Activated CD8-positive, alpha-beta T cell treated with anti-CD3 and anti-CD28 coated beads for 36 hours (primary cell): ENCODE measurements at regions of chr17 and their contacts with region 1.

Region 1: DNA sequence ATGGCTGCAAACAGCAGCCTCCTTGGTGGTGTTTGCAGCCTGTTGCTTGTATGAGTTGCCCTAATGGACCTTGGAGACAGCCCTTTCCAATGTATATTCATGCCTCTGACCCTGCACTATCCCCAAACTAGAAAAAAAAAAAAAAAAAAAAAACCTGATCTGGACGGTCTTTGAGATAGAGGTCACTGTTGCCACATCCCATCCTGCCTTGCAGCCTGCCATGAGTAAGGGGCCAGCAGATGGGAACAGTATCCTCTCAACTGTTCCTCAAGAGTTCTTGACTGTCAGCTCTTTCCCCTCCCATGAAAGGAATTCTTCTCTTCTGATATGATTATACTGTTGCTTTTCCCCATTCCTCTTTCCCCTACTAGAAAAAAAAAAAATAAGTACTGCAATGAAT is 152.4 kb downstream of the SSH2 start:
- DNase-seq: no peak
- ATAC-seq: no peak
- H3K4me3 Mint-ChIP-seq: no peak overlapping the region
- H3K27ac Mint-ChIP-seq: no peak overlapping the region
- H3K4me1 Mint-ChIP-seq: peaks cover 8% of the 10 kb centered on the region
- H3K27me3 Mint-ChIP-seq: no peaks in the 10 kb centered on the region
- CTCF ChIP-seq: no peak

Region 2: DNA sequence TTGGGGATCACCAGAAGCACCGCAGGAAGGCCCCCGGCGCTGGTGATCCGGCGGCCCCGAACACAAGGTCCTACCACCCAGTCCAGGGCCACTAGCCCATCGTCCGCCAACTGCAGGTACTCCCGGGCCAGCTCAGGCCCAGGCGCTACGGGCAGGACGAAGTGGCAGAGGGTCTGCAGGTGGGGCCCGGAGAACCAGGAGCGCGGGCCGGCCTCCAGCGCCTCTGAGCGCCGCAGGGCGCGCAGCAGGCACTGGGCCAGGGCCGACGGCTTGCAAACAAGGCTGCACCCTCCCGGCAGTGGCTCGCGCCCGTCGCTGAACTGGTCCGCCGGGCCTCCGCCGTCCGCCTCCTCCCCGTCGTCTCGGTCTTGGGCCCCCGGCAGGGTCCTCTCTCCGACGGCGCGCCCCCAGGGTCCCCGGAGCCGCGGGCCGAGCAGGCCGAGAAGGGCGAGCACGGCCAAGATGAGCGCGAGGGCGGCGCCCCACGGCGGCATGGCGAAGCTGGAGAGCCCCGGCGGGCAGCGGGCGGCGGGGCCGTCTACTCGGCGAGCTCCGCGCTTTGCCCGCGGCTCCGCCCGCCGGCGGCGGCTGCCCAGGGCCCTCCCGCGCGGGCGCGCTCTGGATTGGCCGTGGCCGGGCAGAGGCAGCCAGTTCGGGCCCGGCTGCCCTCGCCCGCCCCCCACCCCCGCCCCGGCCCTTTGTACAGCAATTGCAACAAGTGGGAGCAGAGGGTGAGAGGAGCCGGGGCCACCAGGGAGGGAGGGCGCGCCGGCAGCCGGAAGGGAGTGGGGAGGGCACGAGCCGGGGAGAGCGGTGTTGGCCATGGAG is 211.0 kb before region 1 on chr17 and contains the start of gene ABHD15:
- CTCF ChIA-PET with region 1: no interaction called
- POLR2A ChIA-PET with region 1: no interaction called
- intact Hi-C with region 1: no loop called
- DNase-seq: peak; percentile 77
- ATAC-seq: peak; percentile 45
- H3K4me3 Mint-ChIP-seq: peak within 1 kb of the TSS; percentile 86
- H3K27ac Mint-ChIP-seq: peak within 1 kb of the TSS; percentile 91
- H3K4me1 Mint-ChIP-seq: peaks cover 32% of the 10 kb centered on the region
- H3K27me3 Mint-ChIP-seq: no peaks in the 10 kb centered on the region
- CTCF ChIP-seq: no peak
- total RNA-seq, gene ABHD15: 9.7 to 10.1 TPM

Region 3: GRCh38 chr17:29640413-29640812 is 137.2 kb before region 1 on chr17:
- CTCF ChIA-PET with region 1: interaction called, 155 read pairs
- POLR2A ChIA-PET with region 1: no interaction called
- intact Hi-C with region 1: loop called (anchors 1 kb)
- DNase-seq: no peak
- ATAC-seq: no peak
- H3K4me3 Mint-ChIP-seq: no peak overlapping the region
- H3K27ac Mint-ChIP-seq: peak overlapping the region; percentile 87
- H3K4me1 Mint-ChIP-seq: peaks cover 34% of the 10 kb centered on the region
- H3K27me3 Mint-ChIP-seq: no peaks in the 10 kb centered on the region
- CTCF ChIP-seq: no peak

Region 4: DNA sequence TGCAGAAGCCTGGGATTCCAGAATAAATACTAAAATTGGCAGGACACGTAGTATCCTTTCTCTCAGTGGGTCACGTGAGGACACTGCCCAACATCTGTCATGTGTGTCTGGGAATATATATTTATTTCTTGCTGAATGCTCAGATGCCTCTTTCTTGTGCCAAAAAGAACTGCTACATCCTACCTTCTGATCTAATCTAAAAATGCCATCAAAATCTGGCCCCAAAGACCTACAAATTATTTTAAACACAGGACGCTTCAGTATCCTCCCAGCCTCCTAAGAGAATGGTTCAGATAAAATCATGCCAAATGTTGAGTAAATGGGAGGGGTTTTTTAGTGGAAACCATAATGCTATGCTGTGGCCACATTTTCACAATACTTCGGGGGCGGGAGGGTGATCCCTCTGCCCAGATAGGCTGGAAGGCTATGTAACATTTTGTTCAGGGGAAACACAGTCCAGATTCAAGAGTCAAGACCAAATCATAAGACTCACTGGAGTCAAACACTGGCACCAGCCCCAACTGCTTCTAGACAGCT is 132.1 kb before region 1 on chr17:
- CTCF ChIA-PET with region 1: interaction called, 155 read pairs
- POLR2A ChIA-PET with region 1: interaction called, 3 read pairs
- intact Hi-C with region 1: no loop called
- DNase-seq: peak; percentile 46
- ATAC-seq: peak; percentile 62
- H3K4me3 Mint-ChIP-seq: no peak overlapping the region
- H3K27ac Mint-ChIP-seq: peak overlapping the region; percentile 31
- H3K4me1 Mint-ChIP-seq: peaks cover 27% of the 10 kb centered on the region
- H3K27me3 Mint-ChIP-seq: no peaks in the 10 kb centered on the region
- CTCF ChIP-seq: no peak

Region 5: GRCh38 chr17:29653995-29654714 is 123.5 kb before region 1 on chr17:
- CTCF ChIA-PET with region 1: interaction called, 14 read pairs
- POLR2A ChIA-PET with region 1: no interaction called
- intact Hi-C with region 1: no loop called
- DNase-seq: no peak
- ATAC-seq: no peak
- H3K4me3 Mint-ChIP-seq: no peak overlapping the region
- H3K27ac Mint-ChIP-seq: no peak overlapping the region
- H3K4me1 Mint-ChIP-seq: peaks cover 4% of the 10 kb centered on the region
- H3K27me3 Mint-ChIP-seq: no peaks in the 10 kb centered on the region
- CTCF ChIP-seq: no peak

Region 6: DNA sequence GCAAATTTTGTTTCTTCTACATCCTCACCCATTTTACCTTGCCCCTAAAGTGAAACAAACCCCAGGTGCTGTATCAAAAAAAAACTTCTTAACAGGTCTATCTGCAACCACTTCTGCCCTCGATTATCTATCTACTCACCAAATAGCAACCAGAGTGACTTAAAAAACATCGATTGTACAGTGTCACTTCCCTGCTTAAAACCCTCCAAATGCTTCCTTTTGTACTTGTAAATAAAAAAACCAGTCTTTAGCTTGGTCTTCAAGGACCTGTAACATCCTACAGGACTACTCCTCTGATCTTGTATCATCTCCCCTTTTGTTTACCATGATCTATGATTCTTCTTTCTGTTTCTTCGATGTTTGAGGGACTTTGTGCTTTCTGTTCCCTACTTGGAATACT is 72.3 kb before region 1 on chr17:
- CTCF ChIA-PET with region 1: interaction called, 12 read pairs
- POLR2A ChIA-PET with region 1: interaction called, 3 read pairs
- intact Hi-C with region 1: no loop called
- DNase-seq: no peak
- ATAC-seq: no peak
- H3K4me3 Mint-ChIP-seq: peak overlapping the region; percentile 71
- H3K27ac Mint-ChIP-seq: peak overlapping the region; percentile 93
- H3K4me1 Mint-ChIP-seq: peaks cover 45% of the 10 kb centered on the region
- H3K27me3 Mint-ChIP-seq: no peaks in the 10 kb centered on the region
- CTCF ChIP-seq: no peak

Region 7: GRCh38 chr17:29793519-29793918 is 15.9 kb after region 1 on chr17:
- CTCF ChIA-PET with region 1: interaction called, 16 read pairs
- POLR2A ChIA-PET with region 1: no interaction called
- intact Hi-C with region 1: no loop called
- DNase-seq: no peak
- ATAC-seq: no peak
- H3K4me3 Mint-ChIP-seq: no peak overlapping the region
- H3K27ac Mint-ChIP-seq: no peak overlapping the region
- H3K4me1 Mint-ChIP-seq: no peaks in the 10 kb centered on the region
- H3K27me3 Mint-ChIP-seq: no peaks in the 10 kb centered on the region
- CTCF ChIP-seq: no peak

Region 8: DNA sequence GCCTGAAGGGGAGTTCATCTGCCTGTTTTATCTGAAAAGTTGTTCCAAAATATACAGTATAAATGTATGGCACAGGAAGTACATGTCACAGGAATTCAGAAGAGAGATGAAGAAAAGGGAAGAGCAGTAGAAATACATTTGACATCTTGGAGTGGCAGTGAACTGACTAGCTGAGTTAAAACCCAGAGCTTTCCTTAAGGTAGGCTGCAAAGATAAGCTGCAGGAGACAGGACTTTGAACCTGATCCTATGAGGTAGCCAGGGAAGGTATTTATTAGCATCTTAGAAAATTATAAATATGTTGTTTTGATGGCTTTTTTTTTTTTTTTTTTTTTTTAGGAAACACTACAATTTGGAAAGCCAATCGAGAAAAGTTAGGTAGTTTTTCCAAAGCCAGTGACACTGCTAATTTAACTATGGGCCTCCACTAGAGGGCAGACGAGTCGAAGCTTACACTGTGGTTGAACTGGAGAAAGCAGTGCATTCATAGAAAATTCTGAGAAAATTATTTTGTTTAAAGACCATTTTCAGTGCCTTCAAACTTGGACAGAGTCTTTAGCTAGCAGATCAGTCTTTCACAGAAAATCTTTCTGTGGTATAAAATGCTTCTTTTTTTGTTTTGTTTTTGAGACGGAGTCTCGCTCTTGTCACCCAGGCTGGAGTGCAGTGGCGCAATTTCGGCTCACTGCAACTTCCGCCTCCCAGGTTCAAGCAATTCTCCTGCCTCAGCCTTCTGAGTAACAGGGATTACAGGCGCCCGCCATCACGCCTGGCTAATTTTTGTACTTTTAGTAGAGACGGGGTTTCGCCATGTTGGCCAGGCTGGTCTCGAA is 30.1 kb after region 1 on chr17:
- CTCF ChIA-PET with region 1: interaction called, 12 read pairs
- POLR2A ChIA-PET with region 1: no interaction called
- intact Hi-C with region 1: no loop called
- DNase-seq: peak; percentile 81
- ATAC-seq: peak; percentile 77
- H3K4me3 Mint-ChIP-seq: no peak overlapping the region
- H3K27ac Mint-ChIP-seq: no peak overlapping the region
- H3K4me1 Mint-ChIP-seq: peaks cover 14% of the 10 kb centered on the region
- H3K27me3 Mint-ChIP-seq: no peaks in the 10 kb centered on the region
- CTCF ChIP-seq: peak; percentile 90